A673 (cell line): ENCODE measurements at regions of chr1 and their contacts with region 1.

Region 1: DNA sequence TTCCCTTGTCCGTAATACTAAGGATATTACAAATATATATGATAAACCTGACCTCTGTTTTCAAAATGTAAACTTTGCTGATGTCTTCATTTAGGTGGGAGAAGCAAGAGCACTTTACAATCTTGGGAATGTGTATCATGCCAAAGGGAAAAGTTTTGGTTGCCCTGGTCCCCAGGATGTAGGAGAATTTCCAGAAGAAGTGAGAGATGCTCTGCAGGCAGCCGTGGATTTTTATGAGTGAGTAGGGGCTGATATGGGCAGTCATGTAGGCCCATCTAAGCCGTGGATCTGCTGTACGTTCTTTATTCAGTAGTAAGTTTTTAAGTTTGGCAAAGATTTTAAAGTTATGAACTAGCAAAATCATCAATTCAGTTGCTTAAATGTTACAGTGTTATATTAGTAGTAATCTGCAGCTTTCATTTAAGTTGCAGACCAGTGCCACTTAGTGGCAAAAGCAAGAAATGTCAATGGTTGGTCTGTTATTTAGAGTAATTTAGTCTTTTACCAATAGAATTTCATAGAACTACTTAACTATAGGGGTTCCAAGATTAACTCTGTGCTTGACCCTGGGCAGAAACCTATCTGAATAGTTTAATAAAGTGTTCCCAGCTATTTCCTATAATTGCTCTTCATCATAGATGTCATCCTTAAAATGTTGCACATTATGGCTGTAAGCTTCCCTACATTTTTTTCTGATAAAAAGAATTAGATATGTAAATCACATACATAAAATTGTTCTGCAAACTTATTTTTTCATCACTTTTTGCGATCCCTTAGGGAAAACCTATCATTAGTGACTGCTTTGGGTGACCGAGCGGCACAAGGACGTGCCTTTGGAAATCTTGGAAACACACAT is 21.3 kb downstream of the GPSM2 start:
- DNase-seq: peak; percentile 77
- H3K4me3 ChIP-seq: no peak overlapping the region
- H3K27ac ChIP-seq: no peak overlapping the region
- H3K4me1 ChIP-seq: no peaks in the 10 kb centered on the region
- H3K27me3 ChIP-seq: no peaks in the 10 kb centered on the region
- CTCF ChIP-seq: peak; percentile 80

Region 2: GRCh38 chr1:107559881-107560280 is 1338.2 kb before region 1 on chr1:
- CTCF ChIA-PET with region 1: no interaction called
- POLR2A ChIA-PET with region 1: no interaction called
- intact Hi-C with region 1: no loop called
- DNase-seq: no peak
- H3K4me3 ChIP-seq: no peak overlapping the region
- H3K27ac ChIP-seq: no peak overlapping the region
- H3K4me1 ChIP-seq: no peaks in the 10 kb centered on the region
- H3K27me3 ChIP-seq: no peaks in the 10 kb centered on the region
- CTCF ChIP-seq: no peak

Region 3: GRCh38 chr1:108512239-108512981 is 385.7 kb before region 1 on chr1:
- CTCF ChIA-PET with region 1: no interaction called
- POLR2A ChIA-PET with region 1: no interaction called
- intact Hi-C with region 1: loop called (anchors 5 kb)
- DNase-seq: peak; percentile 55
- H3K4me3 ChIP-seq: no peak overlapping the region
- H3K27ac ChIP-seq: no peak overlapping the region
- H3K4me1 ChIP-seq: no peaks in the 10 kb centered on the region
- H3K27me3 ChIP-seq: no peaks in the 10 kb centered on the region
- CTCF ChIP-seq: peak; percentile 86

Region 4: DNA sequence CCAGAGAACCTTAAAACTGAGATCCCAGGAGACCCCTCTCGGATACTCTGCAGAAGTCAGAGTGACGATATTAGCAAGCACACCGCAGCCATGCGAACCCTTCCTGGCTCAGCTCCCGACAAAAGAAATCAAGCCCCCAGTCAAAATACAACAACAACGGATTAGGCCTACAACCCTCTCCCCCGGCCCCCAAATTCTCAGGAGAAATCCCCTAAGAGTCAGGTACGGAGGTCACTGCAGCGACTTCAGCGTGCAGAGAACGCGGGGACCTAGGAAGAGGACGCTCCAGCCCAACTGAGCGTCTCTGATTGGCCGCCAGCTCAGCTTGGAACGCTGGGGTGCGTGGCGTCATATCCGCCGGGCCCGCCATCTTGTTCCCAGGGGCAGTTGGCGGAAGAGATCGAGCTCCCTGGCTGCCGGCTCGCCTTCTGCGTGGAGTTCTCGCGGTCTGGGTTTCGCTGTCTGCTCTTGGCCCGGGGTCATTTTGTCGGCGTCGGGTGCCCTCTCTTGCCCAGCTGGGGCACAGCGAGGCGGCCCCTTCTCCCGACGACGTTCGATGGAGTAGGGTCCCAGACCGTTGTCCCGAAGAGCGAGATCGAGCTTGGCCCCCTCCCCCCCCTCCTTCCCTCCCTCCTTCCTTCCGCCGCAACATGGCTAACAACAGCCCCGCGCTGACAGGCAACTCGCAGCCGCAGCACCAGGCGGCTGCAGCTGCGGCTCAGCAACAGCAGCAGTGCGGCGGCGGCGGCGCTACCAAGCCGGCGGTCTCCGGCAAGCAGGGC is 206.0 kb before region 1 on chr1 and contains the start of gene PRPF38B:
- CTCF ChIA-PET with region 1: no interaction called
- POLR2A ChIA-PET with region 1: no interaction called
- intact Hi-C with region 1: loop called (anchors 10 kb)
- DNase-seq: peak; percentile 97
- H3K4me3 ChIP-seq: peak within 1 kb of the TSS; percentile 77
- H3K27ac ChIP-seq: peak within 1 kb of the TSS; percentile 94
- H3K4me1 ChIP-seq: peaks cover 16% of the 10 kb centered on the region
- H3K27me3 ChIP-seq: no peaks in the 10 kb centered on the region
- CTCF ChIP-seq: no peak
- total RNA-seq, gene PRPF38B: 49.3 and 59.5 TPM in 2 replicates

Region 5: GRCh38 chr1:108746372-108747205 is 151.5 kb before region 1 on chr1 and contains the start of gene STXBP3:
- CTCF ChIA-PET with region 1: no interaction called
- POLR2A ChIA-PET with region 1: no interaction called
- intact Hi-C with region 1: loop called (anchors 2 kb)
- DNase-seq: peak; percentile 98
- H3K4me3 ChIP-seq: peak within 1 kb of the TSS; percentile 86
- H3K27ac ChIP-seq: peak within 1 kb of the TSS; percentile 89
- H3K4me1 ChIP-seq: peaks cover 5% of the 10 kb centered on the region
- H3K27me3 ChIP-seq: no peaks in the 10 kb centered on the region
- CTCF ChIP-seq: peak; percentile 99
- total RNA-seq, gene STXBP3: 23.6 and 24.4 TPM in 2 replicates

Region 6: DNA sequence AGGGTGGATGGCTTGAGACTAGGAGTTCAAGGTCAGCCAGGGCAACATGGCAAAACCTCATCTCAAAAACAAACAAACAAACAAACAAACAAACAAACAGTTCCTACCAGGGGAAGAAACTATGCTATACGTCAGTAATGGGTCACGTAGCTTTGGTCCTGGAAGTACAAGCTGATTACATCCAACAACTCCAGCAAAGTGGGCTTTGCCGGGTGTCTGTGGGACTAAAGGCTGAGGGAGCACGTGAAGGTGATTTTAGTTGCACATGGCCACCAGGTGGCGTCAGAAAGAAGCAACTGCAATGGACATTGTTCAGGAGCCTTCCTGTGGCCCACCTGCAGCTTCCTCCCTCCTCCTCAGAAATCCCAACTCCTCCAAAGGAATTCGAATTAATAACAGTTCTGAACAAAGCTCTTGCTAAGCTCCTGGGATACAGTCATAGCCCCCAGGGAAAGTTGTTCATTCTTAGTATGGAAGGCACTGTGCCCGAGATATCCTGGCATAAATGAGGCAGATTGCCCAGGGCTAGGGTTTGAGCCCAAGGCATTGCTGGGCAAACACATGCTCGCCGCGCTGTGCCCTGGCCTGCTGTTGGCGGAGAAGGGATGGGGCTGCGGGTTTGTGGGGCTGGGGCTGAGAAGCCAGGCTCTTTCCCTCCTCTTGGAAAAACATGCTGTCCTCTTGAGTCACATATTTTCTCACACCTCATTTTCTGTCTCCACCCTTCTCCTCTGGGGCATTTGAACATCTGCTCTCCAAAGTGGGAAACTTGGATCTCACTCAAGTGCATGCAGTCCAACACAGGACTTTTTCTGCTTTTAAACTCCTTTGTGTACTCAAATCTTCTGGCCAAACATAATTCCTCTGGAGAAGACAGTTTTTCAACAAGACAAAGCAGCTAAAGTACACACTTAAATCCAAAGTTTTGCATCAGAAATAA is 69.8 kb before region 1 on chr1:
- CTCF ChIA-PET with region 1: interaction called, 6 read pairs
- POLR2A ChIA-PET with region 1: no interaction called
- intact Hi-C with region 1: loop called (anchors 1 kb)
- DNase-seq: peak; percentile 82
- H3K4me3 ChIP-seq: no peak overlapping the region
- H3K27ac ChIP-seq: no peak overlapping the region
- H3K4me1 ChIP-seq: peaks cover 3% of the 10 kb centered on the region
- H3K27me3 ChIP-seq: no peaks in the 10 kb centered on the region
- CTCF ChIP-seq: peak; percentile 87

Region 7: GRCh38 chr1:109282952-109283747 is 385.1 kb after region 1 on chr1 and contains the start of gene PSRC1:
- CTCF ChIA-PET with region 1: no interaction called
- POLR2A ChIA-PET with region 1: no interaction called
- intact Hi-C with region 1: no loop called
- DNase-seq: peak; percentile 98
- H3K4me3 ChIP-seq: peak within 1 kb of the TSS; percentile 88
- H3K27ac ChIP-seq: peak within 1 kb of the TSS; percentile 82
- H3K4me1 ChIP-seq: peaks cover 28% of the 10 kb centered on the region
- H3K27me3 ChIP-seq: no peaks in the 10 kb centered on the region
- CTCF ChIP-seq: peak; percentile 56
- total RNA-seq, gene PSRC1: 75.0 and 85.2 TPM in 2 replicates